Aorta (tissue), 5 donors: ENCODE measurements at regions of chr1 and their contacts with region 1.

Region 1: GRCh38 chr1:230215031-230215430 is 148.0 kb downstream of the GALNT2 start:
- DNase-seq: peak; percentile 68 to 86
- ATAC-seq: peak; percentile 77
- H3K4me3 ChIP-seq: no peak overlapping the region
- H3K27ac ChIP-seq: peak overlapping the region; percentile 72 to 90
- H3K4me1 ChIP-seq: peaks cover 0 to 8% of the 10 kb centered on the region in 2 donors
- H3K27me3 ChIP-seq: no peaks in the 10 kb centered on the region

Region 2: DNA sequence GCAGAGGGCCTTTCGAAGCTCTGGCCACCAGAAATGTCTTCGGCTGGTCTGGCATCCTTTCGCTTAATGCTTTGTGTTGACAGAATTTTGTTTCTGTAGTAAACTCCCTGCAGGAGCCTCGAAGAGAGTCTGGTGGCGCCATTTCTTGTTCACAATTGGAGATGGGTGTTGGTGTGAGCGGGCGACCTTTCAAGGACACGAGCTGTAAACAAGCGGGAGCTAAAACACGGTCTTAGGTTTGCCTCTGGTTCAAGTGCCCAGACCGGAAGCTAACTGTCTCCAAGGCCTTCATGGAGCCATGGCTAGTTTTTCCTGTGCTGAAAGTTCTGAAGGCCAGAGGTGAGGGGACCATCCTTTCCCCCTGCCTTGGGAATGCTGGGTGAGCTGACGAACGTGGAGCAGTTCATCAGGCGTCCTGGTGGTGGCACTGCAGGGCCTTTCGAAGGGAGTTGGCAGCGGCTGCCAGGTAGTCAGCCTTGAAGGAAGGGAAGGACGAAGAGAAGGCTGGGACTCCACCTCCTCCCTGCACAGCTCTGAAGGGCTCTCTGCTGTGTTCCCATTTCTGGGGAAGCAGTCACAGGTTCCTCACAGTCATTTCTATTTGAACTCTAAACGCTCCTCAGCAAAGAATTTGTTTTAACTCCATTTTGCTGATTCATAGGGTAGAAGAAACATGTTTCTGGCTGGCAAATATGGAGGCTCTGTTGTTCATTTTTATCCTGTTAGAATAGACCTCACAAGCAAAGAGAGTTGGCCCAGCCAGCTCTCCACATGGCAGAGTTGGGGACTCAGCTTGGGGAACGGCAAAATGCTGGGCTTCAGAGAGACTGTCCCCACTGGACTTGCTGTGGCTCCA is 553.8 kb before region 1 on chr1:
- intact Hi-C with region 1: loop called (anchors 5 kb)
- DNase-seq: peak; percentile 86 to 93
- ATAC-seq: peak; percentile 90
- H3K4me3 ChIP-seq: no peak overlapping the region
- H3K27ac ChIP-seq: no peak overlapping the region
- H3K4me1 ChIP-seq: no peaks in the 10 kb centered on the region
- H3K27me3 ChIP-seq: no peaks in the 10 kb centered on the region

Region 3: GRCh38 chr1:229999004-229999670 is 215.9 kb before region 1 on chr1:
- intact Hi-C with region 1: loop called in 1 of 2 experiments (anchors 5 kb)
- DNase-seq: no peak
- ATAC-seq: peak; percentile 47
- H3K4me3 ChIP-seq: no peak overlapping the region
- H3K27ac ChIP-seq: peak overlapping the region; percentile 78 to 86
- H3K4me1 ChIP-seq: peaks cover 0 to 8% of the 10 kb centered on the region in 2 donors
- H3K27me3 ChIP-seq: no peaks in the 10 kb centered on the region

Region 4: GRCh38 chr1:230084138-230084880 is 130.7 kb before region 1 on chr1:
- intact Hi-C with region 1: loop called in 1 of 2 experiments (anchors 5 kb)
- DNase-seq: peak; percentile 89
- ATAC-seq: peak; percentile 86
- H3K4me3 ChIP-seq: no peak overlapping the region
- H3K27ac ChIP-seq: peak overlapping the region; percentile 57 to 99
- H3K4me1 ChIP-seq: peaks cover 16 to 18% of the 10 kb centered on the region in 2 donors
- H3K27me3 ChIP-seq: no peaks in the 10 kb centered on the region

Region 5: GRCh38 chr1:230243583-230244353 is 28.7 kb after region 1 on chr1:
- intact Hi-C with region 1: no loop called
- DNase-seq: no peak
- ATAC-seq: no peak
- H3K4me3 ChIP-seq: no peak overlapping the region
- H3K27ac ChIP-seq: no peak overlapping the region
- H3K4me1 ChIP-seq: peaks cover 0 to 2% of the 10 kb centered on the region in 2 donors
- H3K27me3 ChIP-seq: no peaks in the 10 kb centered on the region

Region 6: GRCh38 chr1:230268366-230269170 is 53.5 kb after region 1 on chr1:
- intact Hi-C with region 1: loop called (anchors 5 kb)
- DNase-seq: peak in 1 of 2 donors; percentile 68
- ATAC-seq: peak; percentile 57
- H3K4me3 ChIP-seq: no peak overlapping the region
- H3K27ac ChIP-seq: peak overlapping the region in 1 of 2 donors; percentile 11
- H3K4me1 ChIP-seq: no peaks in the 10 kb centered on the region
- H3K27me3 ChIP-seq: no peaks in the 10 kb centered on the region